OCI-LY7 (cell line): ENCODE measurements at regions of chr3 and their contacts with region 1.

Region 1: GRCh38 chr3:194285024-194285849 is 65.9 kb downstream of the CPN2 start:
- DNase-seq: no peak
- H3K4me3 ChIP-seq: no peak overlapping the region
- H3K27ac ChIP-seq: no peak overlapping the region
- H3K4me1 ChIP-seq: no peaks in the 10 kb centered on the region
- CTCF ChIP-seq: no peak

Region 2: GRCh38 chr3:194218646-194219453 is 66.4 kb before region 1 on chr3:
- CTCF ChIA-PET with region 1: no interaction called
- POLR2A ChIA-PET with region 1: no interaction called
- intact Hi-C with region 1: loop called (anchors 2 kb)
- DNase-seq: peak; percentile 11
- H3K4me3 ChIP-seq: no peak overlapping the region
- H3K27ac ChIP-seq: no peak overlapping the region
- H3K4me1 ChIP-seq: no peaks in the 10 kb centered on the region
- CTCF ChIP-seq: no peak

Region 3: GRCh38 chr3:194422188-194422587 is 137.0 kb after region 1 on chr3:
- CTCF ChIA-PET with region 1: no interaction called
- POLR2A ChIA-PET with region 1: no interaction called
- intact Hi-C with region 1: no loop called
- DNase-seq: no peak
- H3K4me3 ChIP-seq: no peak overlapping the region
- H3K27ac ChIP-seq: no peak overlapping the region
- H3K4me1 ChIP-seq: no peaks in the 10 kb centered on the region
- CTCF ChIP-seq: no peak